ENCODE measurements at regions of chr5 and their contacts with region 1.

Region 1: GRCh38 chr5:72656331-72656730 is 149.1 kb upstream of the ZNF366 start:
- DNase-seq: no peak
- H3K4me3 ChIP-seq: no peak overlapping the region
- H3K27me3 ChIP-seq: no peaks in the 10 kb centered on the region
- CTCF ChIP-seq: no peak

Region 2: GRCh38 chr5:72531496-72532190 is 124.7 kb before region 1 on chr5:
- CTCF ChIA-PET with region 1: no interaction called
- POLR2A ChIA-PET with region 1: no interaction called
- DNase-seq: peak; percentile 41
- H3K4me3 ChIP-seq: no peak overlapping the region
- H3K27me3 ChIP-seq: no peaks in the 10 kb centered on the region
- CTCF ChIP-seq: no peak

Region 3: GRCh38 chr5:72687288-72687687 is 31.0 kb after region 1 on chr5:
- CTCF ChIA-PET with region 1: no interaction called
- POLR2A ChIA-PET with region 1: interaction called, 19 read pairs
- DNase-seq: no peak
- H3K4me3 ChIP-seq: no peak overlapping the region
- H3K27me3 ChIP-seq: peaks cover 8% of the 10 kb centered on the region
- CTCF ChIP-seq: no peak